ENCODE measurements at regions of chr12 and their contacts with region 1.

Region 1: DNA sequence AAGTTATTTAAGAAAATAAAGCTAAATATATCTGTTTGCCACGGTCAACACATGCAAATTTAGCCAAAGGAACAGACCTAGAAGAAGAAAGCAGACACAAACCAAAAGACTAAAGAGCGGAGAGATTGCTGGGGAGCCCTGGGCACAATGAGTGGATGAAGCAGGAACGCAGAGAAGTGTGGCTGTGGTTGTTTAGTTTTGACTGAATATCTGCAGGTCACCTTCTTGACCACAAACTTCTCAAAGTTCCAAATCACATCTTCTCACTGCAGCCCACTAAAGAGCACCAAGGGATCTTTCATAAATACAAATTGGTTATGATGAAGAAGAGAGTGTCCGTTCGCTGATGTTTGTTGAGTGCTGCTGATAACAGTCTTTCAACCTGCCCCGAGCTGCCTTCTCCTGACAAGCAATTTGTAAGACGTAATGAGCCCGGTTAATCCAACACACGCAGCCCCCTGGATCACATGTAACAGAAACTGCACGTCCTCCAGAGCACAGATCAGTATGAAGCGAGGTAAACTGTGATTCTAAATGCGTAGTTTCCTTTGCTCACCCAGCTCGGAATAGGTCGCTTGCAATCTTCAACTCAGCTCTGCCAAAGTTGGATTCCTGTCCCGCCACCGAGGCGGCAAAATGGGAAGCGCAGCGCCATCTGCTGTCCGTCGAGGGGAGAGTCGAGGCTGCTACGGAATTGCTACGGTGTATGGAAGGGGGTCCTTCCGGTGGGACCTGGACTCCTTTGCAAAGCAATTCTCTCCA is 120.8 kb downstream of the GXYLT1 start:
- DNase-seq: peak; percentile 84
- ATAC-seq: peak; percentile 86
- H3K4me3 Mint-ChIP-seq: peak overlapping the region; percentile 39
- H3K27ac Mint-ChIP-seq: no peak overlapping the region
- H3K4me1 Mint-ChIP-seq: peaks cover 8% of the 10 kb centered on the region
- H3K27me3 Mint-ChIP-seq: peaks cover 17% of the 10 kb centered on the region

Region 2: DNA sequence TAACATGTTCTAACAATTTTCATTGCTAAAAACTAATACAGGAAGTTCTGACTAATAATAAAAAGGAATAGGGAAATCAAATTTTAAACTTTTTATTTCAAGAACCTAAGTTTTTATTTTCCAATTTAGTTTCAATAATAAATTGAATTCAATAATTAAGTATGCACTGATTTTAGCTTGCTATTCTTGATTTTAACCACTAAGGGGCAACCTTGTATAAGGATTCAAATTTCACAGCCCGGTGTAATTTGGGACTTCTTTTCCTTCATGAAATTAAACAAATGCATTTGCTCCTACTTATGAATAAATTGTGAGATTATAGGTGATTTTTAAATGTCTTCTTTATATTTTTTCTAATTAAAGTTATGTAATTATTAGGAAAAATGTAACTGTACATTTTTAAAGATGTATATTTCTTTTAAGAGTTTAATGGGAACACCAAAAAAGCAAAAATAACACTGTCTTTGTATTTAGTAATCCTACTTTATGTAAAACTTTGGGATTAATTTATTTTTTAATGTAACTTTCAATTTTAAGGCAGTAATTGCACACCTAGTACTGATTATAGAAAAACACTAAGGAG is 1077.2 kb before region 1 on chr12:
- CTCF ChIA-PET with region 1: interaction called, 27 read pairs
- POLR2A ChIA-PET with region 1: no interaction called
- intact Hi-C with region 1: loop called (anchors 1 kb)
- DNase-seq: no peak
- ATAC-seq: no peak
- H3K4me3 Mint-ChIP-seq: no peak overlapping the region
- H3K27ac Mint-ChIP-seq: no peak overlapping the region
- H3K4me1 Mint-ChIP-seq: no peaks in the 10 kb centered on the region
- H3K27me3 Mint-ChIP-seq: peaks cover 7% of the 10 kb centered on the region

Region 3: GRCh38 chr12:41277116-41277945 is 746.6 kb before region 1 on chr12:
- CTCF ChIA-PET with region 1: interaction called, 23 read pairs
- POLR2A ChIA-PET with region 1: no interaction called
- intact Hi-C with region 1: loop called (anchors 1 to 10 kb)
- DNase-seq: peak; percentile 30
- ATAC-seq: no peak
- H3K4me3 Mint-ChIP-seq: no peak overlapping the region
- H3K27ac Mint-ChIP-seq: no peak overlapping the region
- H3K4me1 Mint-ChIP-seq: no peaks in the 10 kb centered on the region
- H3K27me3 Mint-ChIP-seq: peaks cover 9% of the 10 kb centered on the region

Region 4: GRCh38 chr12:41367726-41368405 is 656.0 kb before region 1 on chr12:
- CTCF ChIA-PET with region 1: no interaction called
- POLR2A ChIA-PET with region 1: no interaction called
- intact Hi-C with region 1: loop called in 1 of 2 experiments (anchors 10 kb)
- DNase-seq: no peak
- ATAC-seq: no peak
- H3K4me3 Mint-ChIP-seq: no peak overlapping the region
- H3K27ac Mint-ChIP-seq: no peak overlapping the region
- H3K4me1 Mint-ChIP-seq: no peaks in the 10 kb centered on the region
- H3K27me3 Mint-ChIP-seq: no peaks in the 10 kb centered on the region

Region 5: GRCh38 chr12:41514907-41515306 is 509.0 kb before region 1 on chr12:
- CTCF ChIA-PET with region 1: no interaction called
- POLR2A ChIA-PET with region 1: no interaction called
- intact Hi-C with region 1: loop called in 1 of 2 experiments (anchors 10 kb)
- DNase-seq: peak; percentile 11
- ATAC-seq: no peak
- H3K4me3 Mint-ChIP-seq: no peak overlapping the region
- H3K27ac Mint-ChIP-seq: no peak overlapping the region
- H3K4me1 Mint-ChIP-seq: no peaks in the 10 kb centered on the region
- H3K27me3 Mint-ChIP-seq: no peaks in the 10 kb centered on the region

Measured in activated CD4-positive, alpha-beta T cell treated with anti-CD3 and anti-CD28 coated beads for 36 hours (primary cell).